ENCODE measurements at regions of chr9 and their contacts with region 1.

Region 1: DNA sequence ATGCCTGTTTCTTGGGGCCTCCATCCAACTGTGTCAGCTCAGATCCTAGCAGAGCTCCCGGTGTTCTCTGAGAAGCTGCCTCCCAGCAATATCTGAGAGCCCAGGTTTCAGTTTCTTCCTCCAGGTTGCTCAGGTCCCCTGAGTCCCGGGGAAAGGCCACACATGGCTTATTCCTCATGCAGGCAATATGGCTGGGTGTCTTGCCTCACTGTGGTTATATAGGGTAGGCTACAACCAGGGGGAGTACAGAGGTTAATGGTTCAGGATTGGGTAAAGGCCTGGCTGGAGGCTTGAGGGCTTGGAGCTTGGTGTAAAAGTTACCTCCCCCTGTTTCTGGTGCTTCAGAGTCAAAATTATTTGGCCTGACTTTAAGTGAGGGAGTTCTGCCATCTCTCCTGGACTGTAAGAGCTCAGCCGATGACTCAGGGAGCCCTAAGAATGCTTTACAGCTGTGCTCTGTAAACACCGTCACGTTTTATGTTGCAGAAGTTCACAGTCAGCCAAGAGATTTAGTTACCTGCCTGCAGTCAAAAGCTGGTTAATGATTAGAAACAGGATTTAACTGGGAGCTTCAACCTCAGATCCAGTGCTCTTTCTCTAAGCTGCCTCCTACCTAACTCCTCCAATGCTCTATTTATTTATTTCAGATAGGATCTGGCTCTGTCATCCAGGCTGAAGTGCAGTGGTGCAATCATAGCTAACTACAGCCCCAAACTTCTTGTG is 24.3 kb upstream of the UBAP2 start:
- DNase-seq: no peak
- H3K4me3 ChIP-seq: no peak overlapping the region
- H3K27ac ChIP-seq: no peak overlapping the region
- H3K4me1 ChIP-seq: no peaks in the 10 kb centered on the region
- H3K27me3 ChIP-seq: no peaks in the 10 kb centered on the region
- CTCF ChIP-seq: no peak
- POLR2A ChIP-seq: no peak

Region 2: DNA sequence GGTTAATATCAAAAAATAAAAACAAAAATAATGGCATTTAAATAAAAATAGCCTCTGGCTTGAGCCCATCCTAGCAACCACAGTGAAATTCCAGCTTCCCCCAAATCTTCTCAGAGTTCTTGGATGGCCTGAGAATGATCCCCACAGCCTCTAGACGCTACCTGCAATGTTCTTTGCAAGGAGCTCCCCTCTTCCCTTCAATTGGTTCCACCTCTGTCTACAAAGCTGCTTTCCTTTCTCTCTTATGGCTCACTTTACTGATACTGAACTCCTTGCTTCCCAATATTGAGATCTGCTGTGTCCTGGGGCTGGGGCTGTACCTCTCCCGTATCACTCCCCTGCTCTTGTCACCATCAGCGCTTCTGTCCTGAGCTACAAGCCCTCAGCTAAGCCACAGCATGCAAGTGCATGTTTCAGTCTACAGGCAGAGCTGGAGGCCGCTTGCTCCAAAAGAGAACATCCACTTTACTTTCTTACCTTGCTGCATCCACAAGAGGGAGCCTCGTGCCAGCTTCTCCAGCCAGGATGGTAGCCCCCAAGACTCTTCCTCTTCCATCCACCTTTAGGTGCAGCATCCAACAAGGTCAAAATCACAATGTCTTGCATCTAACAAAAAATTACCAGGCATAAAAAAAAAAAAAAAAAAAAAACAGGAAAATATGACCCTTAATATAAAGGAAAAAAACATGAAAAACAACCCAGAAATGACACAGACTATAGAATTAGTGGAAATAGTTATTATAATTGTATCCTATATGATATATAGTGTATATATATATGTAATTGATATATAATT is 335.0 kb before region 1 on chr9:
- CTCF ChIA-PET with region 1: interaction called, 28 read pairs
- POLR2A ChIA-PET with region 1: no interaction called
- dilution Hi-C with region 1: no loop called
- intact Hi-C with region 1: no loop called
- DNase-seq: peak; percentile 62
- H3K4me3 ChIP-seq: no peak overlapping the region
- H3K27ac ChIP-seq: no peak overlapping the region
- H3K4me1 ChIP-seq: no peaks in the 10 kb centered on the region
- H3K27me3 ChIP-seq: no peaks in the 10 kb centered on the region
- CTCF ChIP-seq: peak; percentile 68 to 74
- POLR2A ChIP-seq: no peak

Region 3: GRCh38 chr9:33835625-33836260 is 237.3 kb before region 1 on chr9:
- CTCF ChIA-PET with region 1: no interaction called
- POLR2A ChIA-PET with region 1: no interaction called
- dilution Hi-C with region 1: no loop called
- intact Hi-C with region 1: loop called (anchors 5 kb)
- DNase-seq: no peak
- H3K4me3 ChIP-seq: no peak overlapping the region
- H3K27ac ChIP-seq: no peak overlapping the region
- H3K4me1 ChIP-seq: peaks cover 3% of the 10 kb centered on the region
- H3K27me3 ChIP-seq: no peaks in the 10 kb centered on the region
- CTCF ChIP-seq: no peak
- POLR2A ChIP-seq: no peak

Region 4: DNA sequence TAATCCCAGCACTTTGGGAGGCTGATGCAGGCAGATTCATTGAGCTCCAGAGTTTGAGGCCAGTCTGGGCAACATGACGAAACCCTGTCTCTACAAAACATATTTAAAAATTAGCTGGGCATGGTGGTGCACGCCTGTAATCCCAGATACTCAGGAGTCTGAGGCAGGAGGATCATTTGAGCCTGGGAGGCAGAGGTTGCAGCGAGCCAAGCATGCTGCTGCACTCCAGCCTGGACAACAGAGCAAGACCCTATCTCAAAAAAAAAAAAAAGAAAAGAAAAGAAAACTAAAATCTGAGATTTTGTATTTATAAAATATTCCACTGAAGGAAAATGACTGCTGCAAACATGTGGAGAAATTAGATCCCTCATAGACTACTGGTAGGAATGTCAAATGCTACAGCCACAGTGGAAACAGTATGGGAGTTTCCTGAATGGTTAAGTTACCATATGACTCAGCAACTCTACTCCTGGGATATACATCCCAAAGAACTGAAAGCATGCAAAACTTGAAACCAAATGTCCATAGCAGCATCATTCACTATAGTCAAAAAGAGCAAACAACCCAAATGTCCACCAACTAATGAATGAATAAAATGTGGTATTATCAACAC is 130.5 kb before region 1 on chr9:
- CTCF ChIA-PET with region 1: interaction called, 13 read pairs
- POLR2A ChIA-PET with region 1: no interaction called
- dilution Hi-C with region 1: no loop called
- intact Hi-C with region 1: no loop called
- DNase-seq: peak; percentile 71
- H3K4me3 ChIP-seq: no peak overlapping the region
- H3K27ac ChIP-seq: peak overlapping the region; percentile 56
- H3K4me1 ChIP-seq: peaks cover 19% of the 10 kb centered on the region
- H3K27me3 ChIP-seq: no peaks in the 10 kb centered on the region
- CTCF ChIP-seq: peak in 1 of 2 donors; percentile 14
- POLR2A ChIP-seq: no peak

Region 5: GRCh38 chr9:34025062-34025461 is 48.0 kb before region 1 on chr9:
- CTCF ChIA-PET with region 1: interaction called, 5 read pairs
- POLR2A ChIA-PET with region 1: no interaction called
- dilution Hi-C with region 1: no loop called
- intact Hi-C with region 1: loop called (anchors 1 kb)
- DNase-seq: no peak
- H3K4me3 ChIP-seq: no peak overlapping the region
- H3K27ac ChIP-seq: peak overlapping the region; percentile 59
- H3K4me1 ChIP-seq: peaks cover 18% of the 10 kb centered on the region
- H3K27me3 ChIP-seq: no peaks in the 10 kb centered on the region
- CTCF ChIP-seq: no peak
- POLR2A ChIP-seq: no peak

Region 6: GRCh38 chr9:34093578-34093977 is 20.5 kb after region 1 on chr9:
- CTCF ChIA-PET with region 1: interaction called, 17 read pairs
- POLR2A ChIA-PET with region 1: no interaction called
- dilution Hi-C with region 1: no loop called
- intact Hi-C with region 1: no loop called
- DNase-seq: no peak
- H3K4me3 ChIP-seq: no peak overlapping the region
- H3K27ac ChIP-seq: no peak overlapping the region
- H3K4me1 ChIP-seq: no peaks in the 10 kb centered on the region
- H3K27me3 ChIP-seq: no peaks in the 10 kb centered on the region
- CTCF ChIP-seq: no peak
- POLR2A ChIP-seq: no peak

Region 7: DNA sequence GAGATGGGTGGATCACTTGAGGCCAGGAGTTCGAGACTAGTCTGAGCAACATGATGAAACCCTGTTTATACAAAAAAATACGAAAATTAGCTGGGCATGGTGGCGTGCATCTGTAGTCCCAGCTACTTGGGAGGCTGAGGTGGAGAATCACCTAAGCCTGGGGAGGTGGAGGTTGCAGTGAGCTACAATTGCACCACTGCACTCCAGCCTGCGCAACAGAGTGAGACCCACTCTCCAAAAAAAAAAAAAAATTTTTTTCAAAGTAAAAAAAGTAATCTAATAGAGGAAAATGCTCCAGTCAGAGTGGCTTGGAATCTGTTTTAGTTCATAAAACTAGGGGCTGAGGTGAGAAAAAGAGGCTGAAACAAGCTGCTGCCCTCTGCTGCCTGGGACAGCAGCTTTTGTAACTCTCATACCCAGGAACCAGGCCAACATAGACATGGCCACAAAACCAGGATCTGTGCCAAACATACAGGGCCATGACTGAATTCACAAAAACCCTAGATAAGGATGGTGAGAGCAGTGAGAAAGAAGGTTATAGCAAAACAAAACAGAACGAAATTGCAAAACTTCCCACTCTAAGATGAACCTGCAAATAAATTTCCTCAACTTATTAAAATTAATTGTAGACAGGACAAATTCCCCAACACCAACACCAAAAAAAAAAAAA is 66.6 kb after region 1 on chr9:
- CTCF ChIA-PET with region 1: interaction called, 11 read pairs
- POLR2A ChIA-PET with region 1: no interaction called
- dilution Hi-C with region 1: no loop called
- intact Hi-C with region 1: no loop called
- DNase-seq: peak; percentile 89
- H3K4me3 ChIP-seq: no peak overlapping the region
- H3K27ac ChIP-seq: no peak overlapping the region
- H3K4me1 ChIP-seq: no peaks in the 10 kb centered on the region
- H3K27me3 ChIP-seq: no peaks in the 10 kb centered on the region
- CTCF ChIP-seq: peak; percentile 14 to 54
- POLR2A ChIP-seq: no peak

Measured in endothelial cell of umbilical vein (primary cell).